Psoas muscle (tissue), 8 donors: ENCODE measurements at regions of chr3 and their contacts with region 1.

Region 1: DNA sequence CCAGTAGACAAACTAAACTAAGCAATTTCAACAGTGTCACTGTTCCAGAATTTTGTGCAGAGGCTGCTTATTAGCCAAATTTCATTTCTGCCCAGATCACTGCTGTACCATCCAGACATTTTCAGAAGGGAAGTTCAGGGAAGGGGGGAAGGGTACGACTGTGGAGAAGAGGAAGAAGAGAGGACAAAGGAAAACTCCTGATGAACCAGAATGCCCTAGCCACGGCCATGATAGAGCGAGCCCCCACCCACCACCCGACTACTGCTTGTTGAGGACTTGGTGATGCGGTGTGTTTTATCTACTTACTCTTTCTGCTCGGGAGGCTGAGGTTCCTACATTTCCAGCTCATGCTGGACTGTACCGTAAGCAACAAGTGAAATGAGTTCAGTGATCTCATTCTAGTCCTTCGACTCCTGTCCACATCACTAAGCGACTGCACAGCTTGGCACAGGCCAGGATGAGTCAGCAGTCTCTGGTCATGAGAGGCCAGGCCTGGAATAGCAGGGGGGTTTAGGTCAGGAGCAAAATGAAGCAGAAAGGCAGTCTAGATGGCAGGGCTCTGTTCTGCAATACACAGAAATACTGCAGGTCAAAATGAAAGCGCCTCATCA is 330.8 kb downstream of the TIGIT start:
- DNase-seq: peak; percentile 95 to 98
- ATAC-seq: peak; percentile 91 to 96 (median 92)
- H3K4me3 ChIP-seq: peak overlapping the region; percentile 66
- H3K27ac ChIP-seq: peak overlapping the region; percentile 96
- H3K4me1 ChIP-seq: peaks cover 72% of the 10 kb centered on the region
- H3K27me3 ChIP-seq: no peaks in the 10 kb centered on the region
- CTCF ChIP-seq: no peak

Region 2: GRCh38 chr3:114498779-114499370 is 125.8 kb before region 1 on chr3:
- intact Hi-C with region 1: loop called in 1 of 2 experiments (anchors 10 kb)
- DNase-seq: no peak
- ATAC-seq: peak; percentile 64 to 80 (median 70)
- H3K4me3 ChIP-seq: no peak overlapping the region
- H3K27ac ChIP-seq: peak overlapping the region; percentile 43
- H3K4me1 ChIP-seq: peaks cover 67% of the 10 kb centered on the region
- H3K27me3 ChIP-seq: no peaks in the 10 kb centered on the region
- CTCF ChIP-seq: no peak

Region 3: DNA sequence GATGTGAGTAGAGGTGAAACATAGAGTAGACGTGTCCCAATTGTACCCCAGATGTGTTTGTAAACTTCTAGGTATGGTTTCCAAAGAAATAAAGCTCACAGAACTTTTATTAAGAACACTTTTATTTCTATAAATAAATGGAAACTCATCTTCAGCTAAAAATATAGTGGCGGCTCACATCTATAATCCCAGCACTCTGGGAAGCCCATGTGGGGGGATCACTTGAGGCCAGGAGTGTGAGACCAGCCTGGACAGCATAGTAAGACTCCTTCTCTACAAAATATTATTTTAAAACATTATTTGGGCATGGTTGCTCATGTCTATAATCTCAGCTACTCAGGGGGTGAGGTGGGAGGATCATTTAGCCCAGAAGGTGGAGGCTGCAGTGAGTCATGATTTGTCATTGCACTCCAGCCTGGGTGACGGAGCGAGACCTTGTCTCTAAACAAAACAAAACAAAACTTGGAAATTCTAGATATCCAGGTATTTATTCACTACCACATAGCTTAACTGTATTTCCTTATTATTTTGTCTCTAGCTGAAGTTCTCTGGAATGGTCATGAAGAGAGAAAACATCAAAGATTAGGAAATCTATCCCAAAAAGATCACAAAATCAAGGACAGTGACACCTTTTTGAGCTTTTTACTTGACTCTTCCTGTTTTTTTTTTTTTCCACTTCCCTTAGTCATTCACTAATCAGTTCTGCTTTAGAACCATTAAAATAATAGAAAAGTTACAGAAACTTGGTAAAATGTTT is 72.7 kb before region 1 on chr3:
- intact Hi-C with region 1: no loop called
- DNase-seq: no peak
- ATAC-seq: peak; percentile 36 to 60 (median 52)
- H3K4me3 ChIP-seq: no peak overlapping the region
- H3K27ac ChIP-seq: no peak overlapping the region
- H3K4me1 ChIP-seq: peaks cover 12% of the 10 kb centered on the region
- H3K27me3 ChIP-seq: no peaks in the 10 kb centered on the region
- CTCF ChIP-seq: no peak

Region 4: DNA sequence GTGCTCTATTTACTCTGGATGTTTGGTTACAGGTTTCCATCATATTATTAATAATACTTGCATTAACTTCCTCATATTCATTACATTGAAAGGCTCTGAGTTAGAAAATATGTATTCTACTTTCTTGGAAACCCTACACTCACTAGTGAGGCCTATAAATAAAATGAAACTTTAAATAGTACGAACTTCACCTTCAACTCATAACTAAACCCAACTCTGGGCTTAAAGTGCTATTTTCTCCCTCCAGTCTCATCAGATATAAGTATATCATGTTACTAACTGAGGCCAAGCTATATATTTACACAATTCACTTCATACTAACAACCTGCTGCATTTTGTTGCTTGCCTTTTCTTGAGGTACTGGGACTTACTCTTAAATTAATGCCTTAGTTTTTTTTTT is 24.1 kb before region 1 on chr3:
- intact Hi-C with region 1: loop called in 1 of 2 experiments (anchors 2 kb)
- DNase-seq: no peak
- ATAC-seq: peak; percentile 56 to 87 (median 69)
- H3K4me3 ChIP-seq: peak overlapping the region; percentile 20
- H3K27ac ChIP-seq: peak overlapping the region; percentile 51
- H3K4me1 ChIP-seq: peaks cover 70% of the 10 kb centered on the region
- H3K27me3 ChIP-seq: no peaks in the 10 kb centered on the region
- CTCF ChIP-seq: no peak

Region 5: DNA sequence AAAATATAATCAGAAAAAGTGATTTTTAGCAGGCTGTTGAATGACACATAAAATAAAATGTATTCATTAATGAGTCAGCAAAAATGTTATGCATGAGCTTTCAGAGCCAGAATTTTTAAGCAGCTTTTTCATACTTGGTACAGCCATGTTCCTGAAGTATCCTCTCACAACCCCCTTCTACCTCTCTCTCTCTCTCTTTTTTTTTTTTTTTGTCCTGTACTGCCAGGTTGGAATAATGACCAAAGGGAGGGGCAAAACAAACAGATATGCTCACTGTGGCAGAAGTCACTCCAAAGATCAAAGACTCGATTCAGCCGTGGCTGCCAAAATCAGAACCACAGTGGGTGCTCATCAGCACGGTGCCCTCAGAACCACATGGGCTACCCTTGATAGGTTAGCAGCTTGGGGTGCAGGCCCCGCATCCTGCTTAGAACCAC is 139.4 kb after region 1 on chr3:
- intact Hi-C with region 1: loop called in 1 of 2 experiments (anchors 5 kb)
- DNase-seq: no peak
- ATAC-seq: peak in 1 of 4 donors; percentile 34
- H3K4me3 ChIP-seq: no peak overlapping the region
- H3K27ac ChIP-seq: no peak overlapping the region
- H3K4me1 ChIP-seq: peaks cover 47% of the 10 kb centered on the region
- H3K27me3 ChIP-seq: no peaks in the 10 kb centered on the region
- CTCF ChIP-seq: no peak

Region 6: DNA sequence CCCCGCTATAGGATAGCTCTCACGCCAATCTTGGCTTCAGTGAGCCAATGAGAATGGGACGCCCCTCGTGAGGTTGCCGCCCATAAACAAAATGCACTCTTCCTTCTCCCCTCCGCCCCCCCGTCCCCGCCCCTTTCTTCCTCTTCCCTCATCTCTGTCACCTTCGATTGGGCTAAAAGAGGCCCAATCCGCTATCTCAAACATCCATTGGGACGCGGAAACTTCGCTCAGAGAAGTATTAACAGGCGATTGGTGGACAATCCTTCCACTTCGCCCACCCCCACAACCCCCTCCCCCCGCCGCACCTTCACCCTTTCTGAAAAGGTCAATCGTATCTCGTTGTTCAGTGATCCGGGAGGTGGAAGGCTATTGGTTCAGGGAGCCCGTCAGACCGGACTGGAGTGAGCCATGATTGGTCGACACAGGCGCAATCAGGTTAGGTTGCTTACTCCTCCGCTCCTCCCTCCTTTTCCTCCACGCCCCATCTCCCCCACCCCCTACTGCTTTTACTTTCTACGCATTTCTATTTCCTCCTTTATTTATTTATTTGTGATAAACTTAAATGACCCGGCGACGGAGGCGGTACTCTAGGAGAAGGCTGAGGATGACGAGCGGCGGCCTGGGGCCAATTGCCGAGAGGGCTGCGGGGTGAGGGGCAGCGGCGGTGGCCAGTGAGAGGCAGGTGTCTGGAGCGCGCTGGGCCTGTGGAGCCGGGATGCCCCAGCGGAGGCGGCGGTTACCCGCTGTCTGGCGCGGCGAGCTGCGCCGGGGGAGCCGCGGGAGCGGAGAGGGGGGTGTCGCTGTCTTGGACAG is 522.9 kb after region 1 on chr3:
- intact Hi-C with region 1: loop called in 1 of 2 experiments (anchors 10 kb)
- DNase-seq: peak; percentile 98 to 99
- ATAC-seq: peak; percentile 86 to 89 (median 87)
- H3K4me3 ChIP-seq: peak overlapping the region; percentile 79
- H3K27ac ChIP-seq: peak overlapping the region; percentile 96
- H3K4me1 ChIP-seq: peaks cover 33% of the 10 kb centered on the region
- H3K27me3 ChIP-seq: no peaks in the 10 kb centered on the region
- CTCF ChIP-seq: no peak